Activated CD8-positive, alpha-beta T cell treated with anti-CD3 and anti-CD28 coated beads for 36 hours (primary cell): ENCODE measurements at regions of chr5 and their contacts with region 1.

Region 1: DNA sequence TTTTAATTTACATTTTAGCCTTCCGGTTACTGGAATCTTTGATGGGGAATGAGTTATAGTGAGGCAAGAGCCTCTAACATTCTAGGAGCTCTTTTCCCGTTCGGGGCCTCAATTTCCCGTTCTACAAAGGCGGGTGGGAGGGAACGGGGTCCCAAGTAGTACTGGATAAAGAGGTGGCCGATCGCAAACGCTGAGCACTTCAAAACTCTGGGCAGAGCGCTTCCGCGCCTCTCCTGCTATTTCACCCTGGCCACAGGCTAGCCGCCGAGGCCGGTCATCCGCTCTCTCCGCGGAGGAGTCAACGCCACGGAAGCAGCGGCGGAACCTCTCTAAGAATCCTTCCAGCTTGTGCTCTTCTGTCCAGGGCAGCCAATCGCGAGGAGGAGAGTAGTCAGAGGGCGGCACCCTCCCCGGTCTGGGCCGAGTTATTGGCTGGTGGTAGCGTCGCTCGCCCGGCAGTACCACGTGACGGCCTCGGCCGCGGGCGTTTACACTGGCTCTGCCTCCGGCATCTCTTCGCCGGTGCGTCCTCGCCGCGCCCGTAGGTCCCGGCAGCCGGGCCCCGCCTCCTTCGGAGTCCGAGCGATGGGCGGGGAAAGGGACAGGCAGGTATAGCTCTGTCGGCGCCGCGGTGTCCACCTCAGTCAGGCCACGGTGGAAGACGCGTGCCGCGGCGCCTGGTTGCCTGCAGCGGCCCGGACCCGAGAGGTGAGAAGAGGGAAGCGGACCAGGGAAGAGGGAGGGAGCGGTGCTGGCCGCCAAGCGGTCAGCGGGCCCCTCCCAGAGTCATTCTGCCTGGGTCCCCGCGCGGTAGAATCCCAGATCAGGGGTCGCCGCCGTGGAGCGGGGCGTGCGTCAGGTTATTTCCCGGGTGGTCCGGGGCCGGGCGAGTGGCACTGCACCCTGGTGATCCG is at the start of gene SLC26A2:
- DNase-seq: peak; percentile 97
- ATAC-seq: peak; percentile 96
- H3K4me3 Mint-ChIP-seq: peak within 1 kb of the TSS; percentile 95
- H3K27ac Mint-ChIP-seq: peak within 1 kb of the TSS; percentile 99
- H3K4me1 Mint-ChIP-seq: peaks cover 35% of the 10 kb centered on the region
- H3K27me3 Mint-ChIP-seq: no peaks in the 10 kb centered on the region
- CTCF ChIP-seq: no peak
- total RNA-seq, gene SLC26A2: 5.0 to 5.3 TPM

Region 2: DNA sequence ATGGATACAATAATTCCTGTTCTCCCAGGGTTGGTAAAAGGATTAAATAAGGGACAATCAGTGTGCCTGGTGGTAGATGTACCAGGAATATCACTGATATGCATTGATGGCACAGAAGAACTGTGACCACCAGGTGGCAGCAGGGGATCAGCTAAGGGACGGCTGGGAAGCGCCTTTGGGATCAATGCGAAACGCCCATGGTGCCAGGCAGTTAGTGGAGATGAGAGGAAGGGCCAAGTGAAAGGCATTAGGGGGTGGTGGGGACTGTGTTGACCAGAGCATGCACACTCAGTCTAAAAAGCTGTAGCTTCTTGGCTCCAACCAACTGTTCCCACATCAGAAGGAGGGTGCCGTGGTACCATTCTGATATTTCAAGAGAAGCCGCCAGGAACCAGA is 323.7 kb before region 1 on chr5:
- CTCF ChIA-PET with region 1: interaction called, 4 read pairs
- POLR2A ChIA-PET with region 1: no interaction called
- intact Hi-C with region 1: loop called (anchors 10 kb)
- DNase-seq: peak; percentile 81
- ATAC-seq: peak; percentile 65
- H3K4me3 Mint-ChIP-seq: no peak overlapping the region
- H3K27ac Mint-ChIP-seq: no peak overlapping the region
- H3K4me1 Mint-ChIP-seq: peaks cover 19% of the 10 kb centered on the region
- H3K27me3 Mint-ChIP-seq: no peaks in the 10 kb centered on the region
- CTCF ChIP-seq: peak; percentile 98

Region 3: DNA sequence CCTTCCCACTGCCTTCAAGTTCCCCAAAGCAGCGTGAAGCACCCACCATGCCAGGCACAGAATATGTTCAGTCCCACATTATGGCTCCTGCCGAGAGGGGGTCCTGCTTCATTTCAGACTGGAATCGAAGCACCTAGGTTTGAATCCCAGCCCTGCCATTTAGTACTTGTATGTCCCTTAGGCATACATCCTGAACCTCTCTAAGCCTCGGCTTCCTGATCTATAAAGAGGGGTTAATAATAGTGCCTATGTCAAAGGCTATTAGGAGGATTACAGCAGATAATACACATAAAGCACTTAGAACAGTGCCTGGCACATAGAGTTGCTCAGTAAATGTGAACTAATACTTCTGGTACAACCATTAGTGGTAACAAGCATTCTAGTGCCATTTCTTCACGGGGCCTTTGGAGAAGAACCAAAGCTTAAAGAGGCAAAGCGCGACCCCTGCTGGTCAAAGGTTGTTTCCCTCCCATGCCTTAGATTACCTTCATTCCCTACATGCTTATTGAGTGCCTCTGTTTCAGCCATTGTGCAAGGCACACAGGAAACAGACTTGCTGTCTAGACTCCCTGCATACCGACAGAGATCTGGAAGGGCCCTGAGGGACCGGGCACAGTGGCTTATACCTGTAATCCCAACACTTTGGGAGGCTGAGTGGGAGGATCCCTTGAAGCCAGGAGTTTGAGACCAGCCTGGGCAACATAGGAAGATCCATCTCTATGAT is 132.2 kb before region 1 on chr5:
- CTCF ChIA-PET with region 1: interaction called, 81 read pairs
- POLR2A ChIA-PET with region 1: interaction called, 6 read pairs
- intact Hi-C with region 1: no loop called
- DNase-seq: peak; percentile 93
- ATAC-seq: peak; percentile 65
- H3K4me3 Mint-ChIP-seq: no peak overlapping the region
- H3K27ac Mint-ChIP-seq: peak overlapping the region; percentile 52
- H3K4me1 Mint-ChIP-seq: peaks cover 11% of the 10 kb centered on the region
- H3K27me3 Mint-ChIP-seq: no peaks in the 10 kb centered on the region
- CTCF ChIP-seq: peak; percentile 88

Region 4: DNA sequence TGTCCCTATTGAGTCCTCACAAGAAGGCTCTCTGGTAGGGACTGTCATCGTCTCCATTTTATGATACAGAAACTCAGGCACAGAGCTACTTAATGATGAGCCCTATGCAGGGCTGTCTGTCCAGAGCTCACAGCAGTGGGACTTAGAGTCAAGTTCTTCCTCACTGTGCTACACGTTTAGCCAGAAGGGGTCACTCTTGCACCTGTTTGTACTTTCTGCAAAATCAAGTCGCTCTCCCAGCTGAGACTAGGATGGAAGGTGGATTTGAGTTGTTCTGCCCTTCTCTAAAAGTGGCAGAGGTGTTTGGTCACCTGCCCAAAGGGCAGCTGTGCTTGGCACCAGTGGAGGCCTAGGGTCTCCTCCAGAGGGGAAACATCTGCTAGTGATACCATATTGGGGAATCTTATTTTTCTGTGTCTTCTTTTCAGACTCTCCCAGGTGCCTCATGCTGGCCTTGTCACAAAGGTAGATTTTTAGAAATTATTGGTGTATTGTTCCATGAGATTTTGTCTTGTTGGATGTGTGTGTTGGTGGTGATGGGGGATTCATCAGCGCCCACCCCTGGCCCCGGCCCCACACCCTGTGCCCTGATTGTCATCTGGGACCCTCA is 126.2 kb before region 1 on chr5:
- CTCF ChIA-PET with region 1: interaction called, 81 read pairs
- POLR2A ChIA-PET with region 1: interaction called, 6 read pairs
- intact Hi-C with region 1: no loop called
- DNase-seq: peak; percentile 75
- ATAC-seq: peak; percentile 48
- H3K4me3 Mint-ChIP-seq: no peak overlapping the region
- H3K27ac Mint-ChIP-seq: no peak overlapping the region
- H3K4me1 Mint-ChIP-seq: peaks cover 9% of the 10 kb centered on the region
- H3K27me3 Mint-ChIP-seq: no peaks in the 10 kb centered on the region
- CTCF ChIP-seq: peak; percentile 63

Region 5: DNA sequence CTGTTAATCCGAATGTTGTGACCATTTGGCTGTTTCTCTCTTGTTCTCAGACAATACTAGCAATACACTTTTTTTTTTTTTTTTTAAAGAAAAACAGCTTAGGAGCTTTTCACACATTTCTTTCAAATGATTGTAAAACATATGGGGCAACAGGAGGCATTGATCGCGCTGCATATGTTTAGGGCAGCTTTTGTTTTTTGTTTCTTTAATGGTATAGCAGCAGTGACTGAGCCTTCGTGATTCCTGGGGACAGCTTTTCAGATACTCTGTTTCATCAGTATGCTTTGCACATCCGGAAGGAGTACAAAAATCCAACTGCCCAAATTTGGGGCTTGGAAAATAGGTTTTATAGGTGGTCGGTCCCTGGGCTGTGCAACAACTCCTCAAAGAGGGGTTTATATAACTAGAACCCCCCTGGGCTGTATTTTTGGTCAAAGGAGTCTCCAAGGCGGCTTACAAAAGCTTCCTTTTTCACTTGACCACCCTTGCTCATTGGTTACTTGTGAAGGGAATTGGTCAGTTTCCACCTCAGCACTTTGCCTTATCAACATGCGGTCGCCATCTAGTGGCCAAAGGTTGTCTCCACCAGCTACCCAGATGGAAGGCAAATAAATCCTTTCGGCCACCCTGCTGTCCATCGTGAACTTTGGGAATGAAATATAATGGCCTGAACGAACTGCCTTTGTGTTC is 107.7 kb before region 1 on chr5:
- CTCF ChIA-PET with region 1: interaction called, 26 read pairs
- POLR2A ChIA-PET with region 1: no interaction called
- intact Hi-C with region 1: no loop called
- DNase-seq: peak; percentile 67
- ATAC-seq: peak; percentile 58
- H3K4me3 Mint-ChIP-seq: no peak overlapping the region
- H3K27ac Mint-ChIP-seq: no peak overlapping the region
- H3K4me1 Mint-ChIP-seq: no peaks in the 10 kb centered on the region
- H3K27me3 Mint-ChIP-seq: no peaks in the 10 kb centered on the region
- CTCF ChIP-seq: peak; percentile 85

Region 6: DNA sequence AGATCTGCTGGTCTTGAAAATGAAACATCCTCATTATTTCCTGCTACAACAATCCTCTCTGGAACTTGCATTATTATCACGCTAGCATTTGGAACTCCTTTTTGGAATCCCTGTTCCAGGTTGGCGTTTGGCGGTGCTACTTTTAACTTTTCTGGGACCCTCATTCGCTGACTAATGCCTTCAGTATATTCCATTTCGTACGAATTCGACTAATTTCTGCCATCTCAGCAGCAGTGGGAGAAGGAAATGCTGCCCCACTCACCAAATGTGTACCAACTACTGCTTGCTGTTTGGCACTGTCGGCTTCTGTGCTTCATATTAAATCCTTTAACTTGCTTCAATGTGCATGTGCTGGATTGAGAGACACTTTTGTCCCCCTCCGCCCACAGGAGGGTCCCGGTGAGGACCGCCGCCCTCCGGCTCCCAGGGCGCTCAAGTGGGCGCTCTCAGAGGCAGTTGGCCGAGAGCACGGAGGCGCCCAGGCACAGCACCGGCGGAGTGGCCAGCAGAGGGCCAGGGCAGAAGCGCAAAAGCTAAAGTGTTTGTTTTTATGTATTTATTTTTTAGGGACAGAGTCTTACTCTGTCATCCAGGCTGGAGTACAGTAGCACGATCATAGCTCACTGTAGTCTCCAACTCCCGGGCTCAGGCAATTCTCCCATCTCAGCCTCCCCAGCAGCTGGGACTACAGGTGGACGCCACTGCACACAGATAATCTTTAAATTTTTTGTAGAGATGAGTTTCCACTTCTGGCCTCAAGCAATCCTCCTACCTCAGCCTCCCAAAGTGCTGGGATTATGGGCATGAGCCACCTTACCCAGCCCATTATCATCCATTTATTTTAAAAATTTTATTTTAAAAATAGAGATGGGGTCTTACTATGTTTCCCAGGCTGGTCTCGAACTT is 27.8 kb before region 1 on chr5:
- CTCF ChIA-PET with region 1: interaction called, 27 read pairs
- POLR2A ChIA-PET with region 1: no interaction called
- intact Hi-C with region 1: no loop called
- DNase-seq: no peak
- ATAC-seq: no peak
- H3K4me3 Mint-ChIP-seq: no peak overlapping the region
- H3K27ac Mint-ChIP-seq: no peak overlapping the region
- H3K4me1 Mint-ChIP-seq: peaks cover 3% of the 10 kb centered on the region
- H3K27me3 Mint-ChIP-seq: peaks cover 19% of the 10 kb centered on the region
- CTCF ChIP-seq: no peak

Region 7: DNA sequence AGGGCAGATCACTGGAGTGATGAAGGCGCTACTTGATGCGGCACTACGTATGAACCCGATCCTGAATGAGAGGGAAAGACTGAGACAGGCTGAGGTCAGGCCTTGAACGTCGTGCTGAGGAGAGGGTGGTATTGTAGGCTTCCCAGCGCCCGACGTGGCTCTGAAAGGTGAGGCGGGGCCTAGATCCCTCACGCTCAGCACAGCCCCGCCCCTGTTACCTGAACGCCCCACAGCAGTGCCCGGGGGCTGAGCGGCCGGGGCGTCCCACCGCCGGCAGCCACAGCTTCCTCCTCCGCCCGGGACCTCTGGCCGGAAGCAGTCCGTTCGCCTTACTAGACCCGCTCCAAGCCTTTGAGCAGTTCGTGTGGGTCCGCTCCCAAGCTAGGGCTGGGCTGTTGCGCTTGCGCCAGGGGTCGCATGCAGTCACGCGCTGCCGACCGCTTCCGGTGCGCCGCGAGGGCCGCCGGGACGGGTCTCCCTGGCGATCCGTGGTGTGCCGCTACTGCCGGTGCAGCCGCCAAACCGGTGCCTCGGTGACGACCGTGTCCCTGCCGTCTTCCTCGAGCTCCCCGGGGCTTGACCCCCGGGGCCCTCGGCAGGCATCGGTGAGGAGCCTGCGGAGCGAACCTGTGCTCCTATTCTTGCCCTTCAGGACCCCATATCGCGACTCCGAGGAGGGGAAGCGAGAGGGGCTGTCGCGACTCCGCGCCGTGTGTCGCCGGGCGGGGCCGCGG is 39.9 kb after region 1 on chr5 and contains the starts of genes HMGXB3 and TIGD6:
- CTCF ChIA-PET with region 1: interaction called, 13 read pairs
- POLR2A ChIA-PET with region 1: interaction called, 36 read pairs
- intact Hi-C with region 1: loop called (anchors 1 kb)
- DNase-seq: peak; percentile 94
- ATAC-seq: peak; percentile 88
- H3K4me3 Mint-ChIP-seq: peak within 1 kb of the TSS; percentile 93
- H3K27ac Mint-ChIP-seq: peak within 1 kb of the TSS; percentile 95
- H3K4me1 Mint-ChIP-seq: peaks cover 42% of the 10 kb centered on the region
- H3K27me3 Mint-ChIP-seq: no peaks in the 10 kb centered on the region
- CTCF ChIP-seq: no peak
- total RNA-seq, gene HMGXB3: 30.4 to 32.6 TPM
- total RNA-seq, gene TIGD6: 1.2 to 2.2 TPM

Region 8: GRCh38 chr5:150036513-150036912 is 76.0 kb after region 1 on chr5:
- CTCF ChIA-PET with region 1: no interaction called
- POLR2A ChIA-PET with region 1: no interaction called
- intact Hi-C with region 1: no loop called
- DNase-seq: no peak
- ATAC-seq: no peak
- H3K4me3 Mint-ChIP-seq: no peak overlapping the region
- H3K27ac Mint-ChIP-seq: no peak overlapping the region
- H3K4me1 Mint-ChIP-seq: no peaks in the 10 kb centered on the region
- H3K27me3 Mint-ChIP-seq: no peaks in the 10 kb centered on the region
- CTCF ChIP-seq: no peak

Region 9: DNA sequence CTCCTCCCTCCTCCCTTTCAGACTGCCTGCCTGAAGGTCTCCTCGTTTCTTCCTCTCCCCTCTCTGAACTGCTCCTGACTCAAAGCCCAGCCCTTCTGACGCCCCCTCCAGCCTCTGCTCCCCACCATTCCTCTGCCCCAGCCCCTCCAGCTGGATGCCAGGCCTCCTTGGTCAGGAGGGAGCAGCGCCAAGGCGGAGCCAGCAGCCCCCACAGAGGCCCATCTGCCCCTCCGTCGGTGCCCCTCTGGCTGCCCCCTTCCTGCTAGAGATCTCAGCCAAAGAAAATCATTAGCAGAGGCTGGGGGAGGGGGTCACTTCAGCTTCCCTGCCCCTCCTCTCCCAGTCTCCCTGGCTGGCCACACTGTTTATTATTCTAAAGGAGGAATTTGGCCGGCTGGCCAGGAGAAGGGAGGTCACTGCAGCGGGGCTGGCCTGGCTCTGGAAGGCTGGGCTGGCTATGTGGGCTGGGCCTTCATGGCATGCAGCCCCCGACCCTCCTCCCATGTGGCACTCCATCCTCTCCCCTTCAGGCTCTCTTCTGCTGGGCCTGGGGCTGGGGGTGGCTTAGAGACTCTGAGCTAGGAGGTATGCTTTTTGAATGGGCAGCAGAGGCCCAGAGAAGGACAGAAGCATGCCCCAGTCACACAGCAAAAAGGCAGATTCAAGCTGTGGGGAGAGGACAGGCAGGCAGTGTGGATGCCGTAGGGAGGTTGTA is 178.2 kb after region 1 on chr5:
- CTCF ChIA-PET with region 1: no interaction called
- POLR2A ChIA-PET with region 1: no interaction called
- intact Hi-C with region 1: no loop called
- DNase-seq: no peak
- ATAC-seq: no peak
- H3K4me3 Mint-ChIP-seq: no peak overlapping the region
- H3K27ac Mint-ChIP-seq: no peak overlapping the region
- H3K4me1 Mint-ChIP-seq: no peaks in the 10 kb centered on the region
- H3K27me3 Mint-ChIP-seq: no peaks in the 10 kb centered on the region
- CTCF ChIP-seq: no peak